AG04450 (cell line): ENCODE measurements at regions of chr3 and their contacts with region 1.

Region 1: GRCh38 chr3:190321789-190322603 is at the start of gene CLDN1:
- DNase-seq: peak; percentile 39
- H3K4me3 ChIP-seq: peak within 1 kb of the TSS; percentile 67
- H3K27ac ChIP-seq: no peak within 1 kb of the TSS
- H3K27me3 ChIP-seq: no peaks in the 10 kb centered on the region
- CTCF ChIP-seq: peak; percentile 85
- polyA plus RNA-seq, gene CLDN1: 9.6 and 9.8 TPM in 2 replicates

Region 2: GRCh38 chr3:190120269-190121060 is 201.5 kb before region 1 on chr3 and contains the start of gene P3H2:
- CTCF ChIA-PET with region 1: interaction called, 12 read pairs
- POLR2A ChIA-PET with region 1: interaction called, 3 read pairs
- DNase-seq: peak; percentile 78
- H3K4me3 ChIP-seq: peak within 1 kb of the TSS; percentile 75
- H3K27ac ChIP-seq: no peak within 1 kb of the TSS
- H3K27me3 ChIP-seq: no peaks in the 10 kb centered on the region
- CTCF ChIP-seq: peak; percentile 62
- polyA plus RNA-seq, gene P3H2: 23.8 and 32.6 TPM in 2 replicates

Region 3: DNA sequence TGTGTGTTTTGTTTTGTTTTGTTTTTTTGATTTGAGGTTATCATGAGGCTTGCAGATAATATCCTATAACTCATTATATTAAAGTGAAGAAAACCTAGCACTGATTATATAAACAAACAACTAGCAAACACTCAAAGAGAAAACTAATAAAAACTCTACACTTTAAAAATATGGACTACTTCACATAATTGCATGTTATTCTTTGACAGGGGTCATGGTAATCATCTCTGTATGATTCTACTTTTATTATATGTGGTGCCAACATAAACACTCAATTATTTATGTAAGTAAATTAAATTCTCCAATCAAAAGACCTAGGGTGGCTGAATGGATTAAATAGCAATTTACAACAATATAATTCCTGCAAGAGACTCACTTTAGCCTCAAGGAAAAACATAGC is 156.7 kb before region 1 on chr3:
- CTCF ChIA-PET with region 1: no interaction called
- POLR2A ChIA-PET with region 1: no interaction called
- DNase-seq: no peak
- H3K4me3 ChIP-seq: no peak overlapping the region
- H3K27ac ChIP-seq: no peak overlapping the region
- H3K27me3 ChIP-seq: no peaks in the 10 kb centered on the region
- CTCF ChIP-seq: no peak

Region 4: DNA sequence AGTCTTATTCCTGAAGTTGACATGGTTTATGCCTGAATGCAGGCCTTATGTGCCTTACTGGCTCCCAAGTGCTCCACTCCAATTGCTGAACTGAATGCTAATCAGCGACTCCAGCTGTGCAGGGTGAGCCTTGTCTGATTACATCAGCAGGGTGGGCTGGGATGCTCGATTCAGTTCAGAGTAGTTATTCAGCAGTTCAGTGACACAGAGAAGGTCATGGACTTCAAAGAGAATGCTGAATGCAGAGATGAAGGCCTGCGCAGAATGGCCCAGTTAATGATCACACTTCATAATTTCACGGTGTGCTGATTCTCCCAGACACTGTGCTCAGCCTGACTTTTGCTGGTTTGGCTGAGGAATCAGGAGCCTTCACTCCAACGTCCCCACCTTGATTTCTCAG is 63.4 kb before region 1 on chr3:
- CTCF ChIA-PET with region 1: interaction called, 11 read pairs
- POLR2A ChIA-PET with region 1: no interaction called
- DNase-seq: no peak
- H3K4me3 ChIP-seq: no peak overlapping the region
- H3K27ac ChIP-seq: no peak overlapping the region
- H3K27me3 ChIP-seq: no peaks in the 10 kb centered on the region
- CTCF ChIP-seq: no peak

Region 5: DNA sequence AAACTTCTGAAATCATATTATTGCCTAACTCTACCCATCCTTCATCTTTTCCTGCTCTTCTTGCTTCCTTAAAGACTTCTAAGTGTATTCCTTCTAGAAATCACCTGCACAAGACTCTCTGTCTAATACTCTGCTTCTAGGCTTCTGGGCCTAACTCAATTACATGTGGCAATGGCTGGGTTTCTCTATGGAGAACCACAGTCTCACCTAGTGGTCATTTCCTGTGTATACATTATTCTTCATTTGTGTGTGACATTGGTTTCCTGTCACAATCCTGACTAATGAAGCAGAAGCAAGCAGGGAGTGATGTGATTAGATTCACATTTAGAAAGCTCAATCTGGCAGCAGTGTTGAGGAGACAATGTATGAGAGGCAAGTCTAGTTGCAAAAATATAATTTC is 17.1 kb after region 1 on chr3:
- CTCF ChIA-PET with region 1: interaction called, 101 read pairs
- POLR2A ChIA-PET with region 1: no interaction called
- DNase-seq: no peak
- H3K4me3 ChIP-seq: no peak overlapping the region
- H3K27ac ChIP-seq: no peak overlapping the region
- H3K27me3 ChIP-seq: no peaks in the 10 kb centered on the region
- CTCF ChIP-seq: peak; percentile 17; the same call in 1 of the 2 replicates

Region 6: DNA sequence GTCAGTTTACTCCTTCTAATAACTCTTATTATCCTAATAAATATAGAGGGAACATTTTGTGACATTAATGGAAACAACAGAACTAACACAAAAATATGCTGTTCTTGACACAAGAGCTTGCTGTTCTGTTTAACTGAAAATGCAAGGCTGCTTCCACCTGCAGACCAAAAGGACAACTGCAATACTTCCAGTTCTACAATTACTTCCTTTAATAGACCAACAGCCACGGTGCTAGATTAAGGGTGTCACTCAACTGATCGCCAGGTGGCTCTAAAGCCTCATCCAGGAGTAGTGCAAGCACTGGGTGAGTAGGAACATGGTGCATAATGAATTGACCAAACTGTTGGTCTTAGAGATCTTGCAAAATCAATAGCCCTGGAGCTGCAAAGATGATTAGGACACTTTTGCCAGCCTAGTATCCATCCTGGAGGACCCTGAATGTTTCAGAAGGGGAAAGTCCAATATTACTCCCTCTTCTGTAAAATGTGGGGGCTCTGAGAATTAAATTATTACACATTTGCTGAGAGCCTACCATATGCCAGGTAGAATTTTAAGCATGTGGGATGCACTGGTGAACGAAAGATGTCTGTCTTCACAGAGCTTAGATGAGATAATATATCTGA is 62.4 kb after region 1 on chr3:
- CTCF ChIA-PET with region 1: interaction called, 10 read pairs
- POLR2A ChIA-PET with region 1: no interaction called
- DNase-seq: no peak
- H3K4me3 ChIP-seq: no peak overlapping the region
- H3K27ac ChIP-seq: no peak overlapping the region
- H3K27me3 ChIP-seq: no peaks in the 10 kb centered on the region
- CTCF ChIP-seq: peak; percentile 66

Region 7: GRCh38 chr3:190701096-190701532 is 379.1 kb after region 1 on chr3:
- CTCF ChIA-PET with region 1: interaction called, 16 read pairs
- POLR2A ChIA-PET with region 1: no interaction called
- DNase-seq: no peak
- H3K4me3 ChIP-seq: no peak overlapping the region
- H3K27ac ChIP-seq: no peak overlapping the region
- H3K27me3 ChIP-seq: no peaks in the 10 kb centered on the region
- CTCF ChIP-seq: peak; percentile 70

Region 8: DNA sequence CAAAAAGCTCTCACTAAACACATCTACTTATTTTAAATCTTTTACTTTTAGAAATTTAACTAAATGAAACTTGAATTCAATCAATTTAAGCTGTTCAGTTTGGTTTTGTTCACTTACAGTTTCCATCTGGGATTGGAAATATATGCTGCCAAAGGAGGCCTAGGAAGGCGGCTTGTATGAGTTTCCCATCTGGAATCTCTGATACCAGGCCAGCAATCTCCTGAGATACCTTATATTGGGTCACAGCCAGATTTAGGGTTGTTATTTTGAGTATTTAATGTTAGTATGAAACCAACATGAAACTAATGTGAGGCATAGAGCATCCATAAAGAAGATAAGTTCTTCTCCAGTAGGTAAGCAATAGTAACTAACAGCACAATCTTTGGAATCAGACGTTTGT is 445.9 kb after region 1 on chr3:
- CTCF ChIA-PET with region 1: no interaction called
- POLR2A ChIA-PET with region 1: no interaction called
- DNase-seq: no peak
- H3K4me3 ChIP-seq: no peak overlapping the region
- H3K27ac ChIP-seq: no peak overlapping the region
- H3K27me3 ChIP-seq: no peaks in the 10 kb centered on the region
- CTCF ChIP-seq: no peak